Activated CD4-positive, alpha-beta T cell treated with anti-CD3 and anti-CD28 coated beads, Interleukin-2, amount 10 ng/mL, durations not matched to agents 24 days and 14 days (primary cell): ENCODE measurements at regions of chr11 and their contacts with region 1.

Region 1: DNA sequence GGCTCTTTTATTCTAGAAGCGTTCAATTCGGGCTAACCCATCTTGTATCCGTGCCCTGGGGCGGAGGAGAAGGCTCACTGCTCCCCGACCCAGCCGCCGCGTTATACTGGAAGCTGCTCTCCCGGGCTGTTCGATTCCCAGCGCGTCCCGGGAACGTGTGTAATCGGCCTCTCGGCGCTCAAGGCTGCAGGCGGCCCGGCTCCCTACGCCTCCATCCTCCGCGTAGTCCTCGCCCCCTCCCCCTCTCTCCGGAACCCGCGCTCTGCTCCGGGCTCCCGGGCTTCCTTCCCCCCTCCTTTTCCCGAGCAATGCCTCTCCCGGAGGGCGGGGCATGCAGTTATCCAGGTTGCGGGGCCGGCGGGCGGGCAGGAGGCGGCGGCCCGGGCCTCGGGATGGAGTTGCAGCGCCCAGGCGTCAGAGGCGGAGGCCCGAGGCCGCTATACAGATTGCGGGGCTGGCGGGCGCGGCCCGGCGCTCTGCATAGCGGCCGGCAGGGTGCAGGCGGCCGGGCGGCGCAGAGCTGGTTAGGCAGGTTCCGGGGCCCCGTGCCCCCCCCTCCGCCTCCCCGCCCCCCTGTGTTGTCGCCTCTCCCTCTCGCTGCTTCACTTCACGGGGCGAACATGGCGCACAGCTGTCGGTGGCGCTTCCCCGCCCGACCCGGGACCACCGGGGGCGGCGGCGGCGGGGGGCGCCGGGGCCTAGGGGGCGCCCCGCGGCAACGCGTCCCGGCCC is at the start of gene KMT2A:
- DNase-seq: peak; percentile 98
- H3K4me3 Mint-ChIP-seq: peak within 1 kb of the TSS; percentile 97
- H3K27ac Mint-ChIP-seq: peak within 1 kb of the TSS; percentile 92
- H3K4me1 Mint-ChIP-seq: peaks cover 37% of the 10 kb centered on the region
- H3K27me3 Mint-ChIP-seq: peaks cover 2% of the 10 kb centered on the region
- total RNA-seq, gene KMT2A: 70.7 and 73.2 TPM in 2 replicates

Region 2: GRCh38 chr11:117678658-117679406 is 757.2 kb before region 1 on chr11:
- intact Hi-C with region 1: no loop called
- DNase-seq: no peak
- H3K4me3 Mint-ChIP-seq: no peak overlapping the region
- H3K27ac Mint-ChIP-seq: no peak overlapping the region
- H3K4me1 Mint-ChIP-seq: no peaks in the 10 kb centered on the region
- H3K27me3 Mint-ChIP-seq: peaks cover 2% of the 10 kb centered on the region

Region 3: DNA sequence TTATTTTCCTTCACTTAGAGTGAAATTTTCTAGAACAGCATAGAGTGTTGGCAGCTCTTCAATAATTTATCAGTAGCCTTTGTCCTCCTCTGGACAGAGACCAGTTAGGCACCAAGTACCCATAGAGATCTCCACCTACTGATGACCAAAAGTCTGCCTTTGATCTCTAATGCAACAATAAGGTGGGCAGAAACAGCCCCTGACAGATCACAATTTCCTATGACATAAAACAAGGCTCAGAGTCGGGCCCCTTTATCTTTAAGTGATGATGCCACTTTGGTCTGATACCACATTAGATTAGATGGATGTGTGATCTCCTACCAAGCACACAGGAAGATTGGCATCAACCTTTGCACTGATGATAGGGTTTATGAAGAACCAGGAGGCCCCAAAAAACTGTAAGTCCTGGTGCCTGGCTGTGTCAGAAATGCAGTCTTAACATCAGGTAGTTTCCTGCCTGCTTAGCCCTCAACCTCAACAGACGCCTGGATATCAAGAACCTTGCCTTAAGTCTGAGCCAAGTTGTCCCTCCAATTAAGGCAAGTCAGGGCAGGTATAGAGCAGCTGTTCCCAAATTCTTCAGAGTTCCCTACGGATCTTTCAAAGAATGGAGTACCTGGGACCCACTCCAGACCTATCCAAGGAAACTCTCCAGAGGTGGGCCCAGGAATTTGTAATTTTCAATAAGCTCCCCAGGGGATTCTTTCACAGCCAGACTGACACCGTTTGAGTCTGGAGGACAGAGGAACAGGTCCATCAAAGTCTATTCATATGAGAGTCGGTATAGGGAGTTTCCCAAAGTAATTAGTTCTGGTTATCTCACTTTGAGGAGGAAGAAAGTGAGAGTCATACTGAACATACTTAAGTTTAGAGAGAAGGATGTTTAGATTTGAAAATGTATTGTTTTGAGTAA is 389.8 kb before region 1 on chr11:
- intact Hi-C with region 1: loop called (anchors 1 kb)
- DNase-seq: peak; percentile 76
- H3K4me3 Mint-ChIP-seq: peak overlapping the region; percentile 51
- H3K27ac Mint-ChIP-seq: peak overlapping the region; percentile 87
- H3K4me1 Mint-ChIP-seq: peaks cover 75% of the 10 kb centered on the region
- H3K27me3 Mint-ChIP-seq: no peaks in the 10 kb centered on the region

Region 4: DNA sequence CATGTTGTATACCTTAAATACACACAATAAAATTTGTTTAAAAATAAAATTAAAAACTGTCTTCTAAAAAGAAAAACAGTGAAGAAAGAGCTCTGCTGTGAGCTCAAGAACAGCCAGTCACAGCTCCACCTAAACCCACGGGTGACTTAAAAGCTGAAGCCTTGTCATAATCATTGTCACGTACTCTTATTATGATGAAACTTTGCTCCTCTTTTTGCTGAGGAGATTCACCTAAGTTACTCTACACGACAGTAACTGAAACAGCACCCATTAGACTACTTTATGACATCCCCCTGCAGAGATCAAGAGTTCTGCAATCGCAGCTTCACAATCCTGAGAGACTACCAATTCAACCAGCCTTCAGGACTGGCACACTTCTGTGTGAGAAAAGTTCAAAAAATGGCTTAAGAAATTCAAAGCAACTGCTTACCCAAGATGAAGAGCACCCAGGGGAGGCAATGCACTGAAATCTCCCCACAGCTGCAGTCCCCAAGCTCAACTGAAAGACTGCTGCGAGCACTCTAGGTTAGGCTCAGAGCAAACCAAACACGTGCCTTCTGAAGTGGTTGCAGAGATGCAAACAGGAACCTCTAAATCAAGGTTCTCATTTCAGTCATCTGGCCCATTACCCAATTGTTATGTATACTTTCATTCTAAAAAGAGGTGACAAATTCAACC is 211.4 kb before region 1 on chr11 and contains the start of gene JAML:
- intact Hi-C with region 1: loop called (anchors 2 kb)
- DNase-seq: peak; percentile 92
- H3K4me3 Mint-ChIP-seq: peak within 1 kb of the TSS; percentile 91
- H3K27ac Mint-ChIP-seq: peak within 1 kb of the TSS; percentile 96
- H3K4me1 Mint-ChIP-seq: peaks cover 77% of the 10 kb centered on the region
- H3K27me3 Mint-ChIP-seq: no peaks in the 10 kb centered on the region
- total RNA-seq, gene JAML: 303 and 318 TPM in 2 replicates

Region 5: GRCh38 chr11:118338637-118339061 is 97.4 kb before region 1 on chr11:
- intact Hi-C with region 1: loop called (anchors 5 kb)
- DNase-seq: peak; percentile 97
- H3K4me3 Mint-ChIP-seq: peak overlapping the region; percentile 90
- H3K27ac Mint-ChIP-seq: peak overlapping the region; percentile 100
- H3K4me1 Mint-ChIP-seq: peaks cover 65% of the 10 kb centered on the region
- H3K27me3 Mint-ChIP-seq: no peaks in the 10 kb centered on the region

Region 6: DNA sequence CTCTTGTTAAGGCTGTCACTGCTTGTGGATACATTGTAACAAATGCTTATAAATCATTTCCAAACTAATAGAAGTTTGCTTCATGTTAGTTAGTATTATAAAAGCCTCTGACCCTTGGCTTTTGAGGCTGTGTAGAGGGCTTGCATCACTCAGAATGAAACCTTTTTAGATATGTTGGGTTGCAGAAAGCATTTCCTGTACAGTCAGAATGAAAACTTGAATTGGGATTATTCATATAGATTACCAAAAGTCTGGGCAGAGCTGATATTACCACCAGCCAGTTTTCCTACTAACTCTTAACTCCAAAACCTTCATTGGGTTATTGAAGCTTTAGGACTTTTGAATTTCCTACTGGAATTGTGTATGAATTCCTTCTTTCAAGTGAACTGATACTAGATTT is 12.2 kb after region 1 on chr11:
- intact Hi-C with region 1: loop called (anchors 1 kb)
- DNase-seq: peak; percentile 74
- H3K4me3 Mint-ChIP-seq: peak overlapping the region; percentile 44
- H3K27ac Mint-ChIP-seq: peak overlapping the region; percentile 35
- H3K4me1 Mint-ChIP-seq: peaks cover 57% of the 10 kb centered on the region
- H3K27me3 Mint-ChIP-seq: no peaks in the 10 kb centered on the region

Region 7: DNA sequence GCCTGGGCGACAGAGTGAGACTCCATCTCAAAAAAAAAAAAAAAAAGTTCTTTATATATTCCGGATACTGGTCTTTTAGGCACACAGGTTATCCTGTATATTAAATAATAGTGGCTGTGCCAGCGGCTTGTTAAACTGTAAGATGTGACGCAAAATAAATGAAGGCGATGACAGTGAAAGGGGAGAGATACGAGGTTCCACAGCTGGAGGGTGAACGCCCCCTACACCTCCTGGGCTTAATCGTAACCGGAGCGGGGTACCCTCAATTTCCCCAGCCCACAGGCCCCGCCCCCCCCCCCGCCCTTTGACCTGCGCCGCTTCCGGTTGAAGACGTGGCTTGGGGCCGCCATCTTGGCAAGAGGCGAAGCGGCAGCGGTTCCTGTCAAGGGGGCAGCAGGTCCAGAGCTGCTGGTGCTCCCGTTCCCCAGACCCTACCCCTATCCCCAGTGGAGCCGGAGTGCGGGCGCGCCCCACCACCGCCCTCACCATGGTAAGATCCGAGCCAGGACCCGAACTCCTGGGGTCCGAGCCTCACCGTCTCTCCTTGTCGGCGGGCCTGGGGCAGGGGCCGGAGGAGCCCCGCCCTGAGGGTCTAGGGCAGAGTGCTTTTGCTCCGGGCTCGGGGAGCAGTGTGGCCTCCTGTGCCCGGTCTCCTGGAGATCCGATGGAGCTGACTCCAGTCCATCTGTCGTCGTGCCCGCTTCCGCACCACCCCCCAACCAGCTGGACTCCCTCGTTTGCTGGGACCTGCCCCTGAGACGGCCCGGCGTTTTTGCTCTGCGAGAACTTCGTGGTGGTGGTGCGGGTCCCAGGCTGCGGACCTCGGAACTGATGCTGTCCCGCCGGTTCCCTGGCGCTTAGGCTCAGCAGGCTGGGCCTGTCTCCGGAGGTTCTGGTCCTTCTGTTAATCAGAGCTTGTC is 136.3 kb after region 1 on chr11 and contains the start of gene ARCN1:
- intact Hi-C with region 1: loop called (anchors 5 kb)
- DNase-seq: peak; percentile 93
- H3K4me3 Mint-ChIP-seq: peak within 1 kb of the TSS; percentile 97
- H3K27ac Mint-ChIP-seq: peak within 1 kb of the TSS; percentile 93
- H3K4me1 Mint-ChIP-seq: peaks cover 34% of the 10 kb centered on the region
- H3K27me3 Mint-ChIP-seq: no peaks in the 10 kb centered on the region
- total RNA-seq, gene ARCN1: 147 and 150 TPM in 2 replicates